ENCODE measurements at regions of chr20 and their contacts with region 1.

Region 1: GRCh38 chr20:32772046-32772445 is 9.9 kb downstream of the DNMT3B start:
- DNase-seq: no peak
- H3K4me3 ChIP-seq: no peak overlapping the region
- H3K27ac ChIP-seq: no peak overlapping the region
- H3K4me1 ChIP-seq: peaks cover 3 to 7% (median 6%) of the 10 kb centered on the region in 4 donors
- H3K27me3 ChIP-seq: no peaks in the 10 kb centered on the region
- CTCF ChIP-seq: no peak
- EP300 ChIP-seq: no peak
- POLR2A ChIP-seq: no peak

Region 2: DNA sequence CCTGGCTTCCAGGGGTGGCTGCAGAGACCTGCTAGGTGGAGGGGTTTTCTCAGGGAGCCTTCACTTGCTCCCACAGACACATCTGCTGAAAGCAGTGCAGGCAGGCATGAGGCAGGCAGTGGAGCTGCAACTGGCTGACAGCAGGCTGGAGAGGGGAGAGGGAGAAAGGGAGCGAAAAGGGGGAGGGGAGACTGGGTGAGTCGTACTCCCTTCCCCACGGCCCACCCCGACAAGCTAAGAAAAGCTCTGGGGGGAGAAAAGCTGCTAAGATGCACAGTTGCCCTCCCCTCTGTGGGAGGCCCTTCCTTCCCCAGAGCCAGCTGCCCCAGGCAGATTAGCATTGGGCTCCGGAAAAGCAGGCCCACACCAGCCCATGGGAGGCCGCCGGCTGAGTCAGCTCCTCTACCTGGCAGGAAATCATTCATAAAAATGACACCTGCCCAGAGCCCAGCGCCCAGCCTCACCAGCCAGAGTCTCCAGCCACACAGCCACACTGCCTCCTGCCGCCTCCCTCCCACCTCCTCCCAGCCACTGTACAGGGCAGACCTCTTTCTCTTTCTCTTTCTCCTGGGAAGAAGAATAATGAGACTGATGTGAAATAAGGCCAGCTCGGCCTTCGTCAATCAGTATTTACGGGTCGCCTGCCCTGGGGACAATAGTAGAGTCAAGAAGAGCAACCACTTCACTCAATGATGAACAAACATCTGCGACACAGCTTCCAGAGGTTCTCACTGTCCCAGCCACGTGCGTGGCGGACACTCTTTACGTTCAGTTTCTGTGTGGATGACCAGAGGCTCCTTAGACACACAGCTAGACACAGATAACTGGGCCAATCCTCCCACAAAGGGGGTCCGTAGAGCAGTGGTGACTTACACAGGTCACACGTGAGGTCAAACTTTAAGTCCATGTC is 90.6 kb before region 1 on chr20:
- intact Hi-C with region 1: loop called (anchors 5 kb)
- DNase-seq: peak in 1 of 2 donors; percentile 79
- H3K4me3 ChIP-seq: no peak overlapping the region
- H3K27ac ChIP-seq: peak overlapping the region in 1 of 5 donors; percentile 14
- H3K4me1 ChIP-seq: peaks cover 0 to 15% (median 6%) of the 10 kb centered on the region in 4 donors
- H3K27me3 ChIP-seq: no peaks in the 10 kb centered on the region
- CTCF ChIP-seq: no peak
- EP300 ChIP-seq: no peak
- POLR2A ChIP-seq: no peak

Measured in stomach (tissue), 19 donors.